ENCODE measurements at regions of chr1 and their contacts with region 1.

Region 1: DNA sequence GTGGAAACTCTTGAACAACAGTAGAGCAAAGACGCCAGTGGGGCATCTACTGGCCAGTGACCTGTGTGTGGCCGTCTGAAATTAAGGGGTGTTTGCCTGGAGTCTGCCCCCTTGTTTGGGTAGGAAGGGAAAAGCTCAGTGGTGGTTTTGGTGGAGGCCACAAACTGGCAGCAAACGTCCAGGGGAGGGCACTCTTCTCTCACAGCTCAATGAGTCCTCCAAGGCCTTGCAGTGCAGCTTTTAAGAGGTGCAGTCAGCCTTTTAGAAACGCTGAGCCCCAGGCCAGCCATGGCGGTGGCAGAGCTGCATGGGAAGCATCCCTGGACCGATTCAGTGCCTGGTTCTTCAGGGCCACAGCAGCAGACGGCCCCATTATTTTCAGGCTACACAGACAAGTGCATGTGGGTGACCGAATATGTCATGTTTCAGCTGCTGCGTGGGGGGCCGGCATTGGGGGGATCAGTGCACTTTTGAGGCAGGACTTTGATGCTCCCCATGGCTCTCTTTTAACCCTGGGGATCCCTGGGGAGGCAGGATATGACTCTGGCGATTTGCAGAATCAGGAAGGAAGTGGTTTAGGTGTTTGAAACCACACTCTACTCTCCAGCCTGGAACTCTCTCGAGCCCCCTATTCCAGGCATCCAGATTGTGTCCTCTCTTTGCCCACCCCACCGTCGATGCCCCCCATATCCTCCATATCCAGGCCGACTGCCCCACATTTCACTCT is 414.0 kb downstream of the PRDM2 start:
- DNase-seq: peak in 4 of 5 donors; percentile 23 to 53 (median 32)
- ATAC-seq: peak; percentile 61 to 85 (median 78)
- H3K4me3 ChIP-seq: no peak overlapping the region
- H3K27ac ChIP-seq: no peak overlapping the region
- H3K4me1 ChIP-seq: no peaks in the 10 kb centered on the region
- H3K27me3 ChIP-seq: no peaks in the 10 kb centered on the region
- CTCF ChIP-seq: peak in 11 of 12 donors; percentile 32 to 62 (median 49)
- POLR2A ChIP-seq: no peak

Region 2: GRCh38 chr1:14282707-14283106 is 168.7 kb after region 1 on chr1:
- intact Hi-C with region 1: loop called in 1 of 10 experiments (anchors 10 kb)
- DNase-seq: no peak
- ATAC-seq: peak in 1 of 4 donors; percentile 59
- H3K4me3 ChIP-seq: no peak overlapping the region
- H3K27ac ChIP-seq: no peak overlapping the region
- H3K4me1 ChIP-seq: peaks cover 0 to 6% (median 0%) of the 10 kb centered on the region in 12 donors
- H3K27me3 ChIP-seq: peaks cover 0 to 6% (median 0%) of the 10 kb centered on the region in 9 donors
- CTCF ChIP-seq: no peak
- POLR2A ChIP-seq: no peak

Region 3: DNA sequence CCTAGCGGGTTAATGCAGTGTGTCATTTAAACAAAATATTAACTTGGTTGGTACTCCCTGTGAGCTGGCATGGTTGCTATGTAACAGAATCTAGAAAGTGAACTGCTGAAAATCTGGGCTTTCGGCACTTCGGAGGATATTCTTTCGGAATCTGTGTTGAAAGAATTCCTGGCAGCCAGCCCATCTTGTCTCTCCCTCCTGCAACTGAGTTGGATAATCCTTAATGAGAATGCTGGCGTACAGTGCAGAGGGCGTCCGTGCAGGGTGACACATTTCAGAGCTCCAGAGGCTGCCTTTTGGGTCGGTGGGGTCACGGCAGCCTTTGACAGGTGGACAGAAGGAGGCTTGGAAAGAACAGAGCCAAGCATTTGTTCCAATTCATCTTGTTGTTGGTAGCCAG is 488.1 kb after region 1 on chr1:
- intact Hi-C with region 1: no loop called
- DNase-seq: peak in 3 of 5 donors; percentile 29 to 50 (median 41)
- ATAC-seq: peak in 1 of 4 donors; percentile 31
- H3K4me3 ChIP-seq: no peak overlapping the region
- H3K27ac ChIP-seq: no peak overlapping the region
- H3K4me1 ChIP-seq: peaks cover 0 to 18% (median 5%) of the 10 kb centered on the region in 12 donors
- H3K27me3 ChIP-seq: peaks cover 20 to 92% (median 58%) of the 10 kb centered on the region in 9 donors
- CTCF ChIP-seq: no peak
- POLR2A ChIP-seq: no peak

Region 4: GRCh38 chr1:14733048-14733778 is 619.2 kb after region 1 on chr1:
- intact Hi-C with region 1: loop called in 4 of 10 experiments (anchors 5 to 10 kb)
- DNase-seq: no peak
- ATAC-seq: no peak
- H3K4me3 ChIP-seq: no peak overlapping the region
- H3K27ac ChIP-seq: no peak overlapping the region
- H3K4me1 ChIP-seq: peaks cover 0 to 11% (median 0%) of the 10 kb centered on the region in 12 donors
- H3K27me3 ChIP-seq: peaks cover 0 to 37% (median 4%) of the 10 kb centered on the region in 9 donors
- CTCF ChIP-seq: no peak
- POLR2A ChIP-seq: no peak

Region 5: GRCh38 chr1:14915356-14916054 is 801.5 kb after region 1 on chr1:
- intact Hi-C with region 1: loop called in 1 of 10 experiments (anchors 10 kb)
- DNase-seq: peak in 4 of 5 donors; percentile 27 to 53 (median 43)
- ATAC-seq: peak in 3 of 4 donors; percentile 48 to 62 (median 59)
- H3K4me3 ChIP-seq: no peak overlapping the region
- H3K27ac ChIP-seq: no peak overlapping the region
- H3K4me1 ChIP-seq: peaks cover 0 to 2% (median 0%) of the 10 kb centered on the region in 12 donors
- H3K27me3 ChIP-seq: no peaks in the 10 kb centered on the region
- CTCF ChIP-seq: peak; percentile 80 to 93 (median 90)
- POLR2A ChIP-seq: no peak

Region 6: GRCh38 chr1:14997646-14998276 is 883.8 kb after region 1 on chr1:
- intact Hi-C with region 1: no loop called
- DNase-seq: no peak
- ATAC-seq: no peak
- H3K4me3 ChIP-seq: no peak overlapping the region
- H3K27ac ChIP-seq: no peak overlapping the region
- H3K4me1 ChIP-seq: no peaks in the 10 kb centered on the region
- H3K27me3 ChIP-seq: no peaks in the 10 kb centered on the region
- CTCF ChIP-seq: no peak
- POLR2A ChIP-seq: no peak

Region 7: DNA sequence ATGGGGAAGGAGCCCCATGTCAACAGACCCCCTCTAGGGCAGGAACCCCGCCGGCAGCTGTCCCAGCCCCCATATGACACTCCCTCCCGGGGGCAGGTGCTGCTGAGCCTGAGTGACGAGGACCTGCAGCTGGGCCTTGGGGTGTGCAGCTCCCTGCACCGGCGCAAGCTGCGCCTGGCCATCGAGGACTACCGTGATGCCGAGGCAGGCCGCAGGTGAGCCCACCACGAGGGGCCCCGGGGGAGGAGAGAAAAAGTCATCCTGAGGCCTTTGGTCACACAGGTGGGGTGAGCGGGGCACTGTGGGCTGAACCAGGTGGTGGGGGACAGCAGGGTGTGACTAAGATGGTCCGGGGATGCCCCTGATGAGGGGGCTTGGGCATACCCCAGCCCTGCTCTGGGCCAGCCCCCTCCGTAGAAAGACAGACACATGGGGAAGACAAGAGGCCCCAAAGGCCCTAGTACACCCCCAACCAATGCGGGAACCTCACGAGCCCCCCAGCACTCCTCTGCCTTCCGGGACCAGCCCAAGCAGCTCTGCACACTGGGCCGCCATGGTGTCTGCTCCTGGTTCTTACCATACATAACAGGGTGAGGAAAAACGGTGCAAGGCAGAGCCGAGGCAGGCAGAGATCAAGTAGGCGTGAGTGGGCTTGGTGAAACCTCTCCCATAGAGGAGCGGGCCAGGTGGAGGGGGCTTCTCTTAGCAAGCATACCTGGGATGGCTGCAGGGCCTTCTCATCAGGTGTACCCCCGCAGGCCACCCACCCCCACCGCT is 980.9 kb after region 1 on chr1:
- intact Hi-C with region 1: loop called in 1 of 10 experiments (anchors 5 kb)
- DNase-seq: peak in 1 of 5 donors; percentile 9
- ATAC-seq: no peak
- H3K4me3 ChIP-seq: no peak overlapping the region
- H3K27ac ChIP-seq: no peak overlapping the region
- H3K4me1 ChIP-seq: peaks cover 0 to 9% (median 0%) of the 10 kb centered on the region in 12 donors
- H3K27me3 ChIP-seq: peaks cover 0 to 5% (median 0%) of the 10 kb centered on the region in 9 donors
- CTCF ChIP-seq: no peak
- POLR2A ChIP-seq: no peak

Measured in heart left ventricle (tissue), 16 donors.